Adrenal gland (tissue), 19 donors: ENCODE measurements at regions of chr15 and their contacts with region 1.

Region 1: DNA sequence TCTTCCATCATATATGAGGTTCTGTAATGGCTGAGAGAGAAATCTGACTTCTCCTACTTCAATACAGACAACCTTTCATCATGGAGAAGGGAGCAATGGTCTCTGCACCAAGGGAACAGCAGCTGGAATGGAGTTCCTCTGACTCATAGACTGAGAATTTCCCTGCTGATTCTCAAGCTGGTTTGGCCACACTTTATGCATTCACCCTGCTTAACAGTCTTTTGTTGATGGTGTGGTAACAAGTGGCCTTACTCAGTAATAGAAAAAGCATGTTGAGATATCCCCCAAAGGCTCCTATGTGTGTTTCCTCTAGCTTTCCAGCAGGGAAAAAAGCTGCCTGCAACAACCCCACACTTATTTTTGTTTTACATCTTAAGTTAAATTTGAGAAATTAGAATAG is 138.1 kb downstream of the GREM1 start:
- DNase-seq: peak in 2 of 7 donors; percentile 13 to 33
- H3K4me3 ChIP-seq: no peak overlapping the region
- H3K27ac ChIP-seq: no peak overlapping the region
- H3K4me1 ChIP-seq: peaks cover 0 to 1% of the 10 kb centered on the region in 2 donors
- H3K27me3 ChIP-seq: no peaks in the 10 kb centered on the region
- CTCF ChIP-seq: no peak
- POLR2A ChIP-seq: no peak

Region 2: DNA sequence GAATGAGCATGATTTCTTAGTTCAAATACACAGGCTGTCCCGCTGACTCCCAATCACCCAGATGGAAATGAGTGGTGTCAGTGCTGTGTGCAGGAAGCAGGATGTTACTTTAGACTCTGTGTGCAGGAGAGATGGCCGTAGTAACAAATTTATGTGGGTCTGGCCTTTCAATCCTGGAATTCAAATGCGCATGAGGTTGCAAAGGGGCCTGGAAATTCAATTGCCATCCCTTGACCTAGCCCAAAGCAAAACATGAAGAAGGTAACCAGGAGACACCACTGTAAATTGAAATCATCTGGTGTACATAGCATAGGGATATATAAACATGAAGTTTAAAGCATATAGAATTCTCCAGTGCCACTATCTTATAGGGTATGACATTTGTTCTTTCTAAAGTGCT is 105.0 kb before region 1 on chr15:
- intact Hi-C with region 1: no loop called
- DNase-seq: no peak
- H3K4me3 ChIP-seq: no peak overlapping the region
- H3K27ac ChIP-seq: no peak overlapping the region
- H3K4me1 ChIP-seq: no peaks in the 10 kb centered on the region
- H3K27me3 ChIP-seq: no peaks in the 10 kb centered on the region
- CTCF ChIP-seq: no peak
- POLR2A ChIP-seq: no peak

Region 3: DNA sequence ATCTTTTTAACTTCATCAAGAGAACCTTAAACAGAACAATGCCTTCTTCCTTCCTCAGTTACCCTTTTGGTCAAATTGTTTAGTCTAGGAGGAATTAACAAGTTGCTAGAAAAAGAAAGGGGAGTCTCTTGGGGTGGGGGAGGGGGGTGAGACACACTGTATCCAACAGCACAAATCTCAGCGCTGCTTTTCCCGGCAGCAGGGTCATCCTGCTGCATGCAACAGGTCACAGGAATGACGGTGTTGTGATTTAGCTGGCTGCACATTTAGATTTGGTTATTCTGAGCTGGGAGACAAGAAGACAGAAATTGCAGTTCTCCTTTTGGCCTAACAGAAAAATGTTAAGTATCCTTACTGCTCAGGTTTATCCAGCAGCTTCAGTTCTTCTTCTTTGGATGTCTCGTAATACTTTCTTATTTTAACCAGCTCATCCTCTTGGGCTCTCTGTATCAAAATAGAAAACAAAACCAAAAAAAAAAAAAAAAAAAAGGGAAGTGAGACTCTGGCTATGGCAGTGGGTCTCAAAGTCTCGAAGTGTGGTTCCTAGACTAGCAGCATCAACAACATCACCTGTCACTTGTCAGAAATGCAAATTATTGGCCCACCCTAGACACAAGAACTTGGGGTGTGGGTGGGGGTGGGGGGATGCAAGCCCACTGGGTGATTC is 52.3 kb after region 1 on chr15:
- intact Hi-C with region 1: loop called in 1 of 2 experiments (anchors 10 kb)
- DNase-seq: no peak
- H3K4me3 ChIP-seq: no peak overlapping the region
- H3K27ac ChIP-seq: peak overlapping the region in 1 of 5 donors; percentile 44
- H3K4me1 ChIP-seq: peaks cover 0 to 6% of the 10 kb centered on the region in 2 donors
- H3K27me3 ChIP-seq: no peaks in the 10 kb centered on the region
- CTCF ChIP-seq: no peak
- POLR2A ChIP-seq: no peak

Region 4: DNA sequence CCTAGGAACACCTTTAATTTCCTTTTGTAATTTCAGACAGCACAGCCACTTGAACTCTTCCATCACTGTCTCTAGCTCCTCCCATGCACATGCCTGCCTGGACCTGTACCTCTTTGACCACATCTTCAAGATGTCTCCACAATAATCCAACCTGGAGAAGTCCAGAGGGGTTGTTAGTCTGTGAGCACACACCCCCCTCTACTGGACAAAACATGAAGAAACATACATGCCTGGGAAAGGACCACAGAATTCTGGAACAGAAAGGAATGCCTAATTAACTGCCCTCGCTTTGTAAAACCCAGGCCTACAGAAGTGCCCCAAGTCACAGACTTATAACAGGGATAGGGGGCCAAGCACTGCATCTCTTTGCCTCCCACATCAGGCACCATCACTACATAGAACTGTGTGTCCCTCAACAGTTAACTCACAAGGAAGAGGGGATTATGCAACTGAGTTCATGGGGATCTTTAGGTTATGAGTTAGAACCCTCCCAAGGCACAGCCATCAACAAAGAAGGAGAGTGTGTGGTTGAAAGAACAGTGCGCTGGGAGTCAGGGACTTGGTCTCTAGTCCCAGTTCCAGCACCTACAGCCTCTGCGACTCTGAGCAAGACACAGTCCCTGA is 276.9 kb after region 1 on chr15:
- intact Hi-C with region 1: no loop called
- DNase-seq: no peak
- H3K4me3 ChIP-seq: no peak overlapping the region
- H3K27ac ChIP-seq: no peak overlapping the region
- H3K4me1 ChIP-seq: no peaks in the 10 kb centered on the region
- H3K27me3 ChIP-seq: no peaks in the 10 kb centered on the region
- CTCF ChIP-seq: peak; percentile 15 to 52 (median 45)
- POLR2A ChIP-seq: no peak